HCT116 (cell line): ENCODE measurements at regions of chr19 and their contacts with region 1.

Region 1: GRCh38 chr19:39125554-39126311 is at the start of gene PAK4:
- DNase-seq: peak; percentile 96
- ATAC-seq: peak; percentile 86
- H3K4me3 ChIP-seq: peak within 1 kb of the TSS; percentile 96 to 99
- H3K27ac ChIP-seq: peak within 1 kb of the TSS; percentile 84
- H3K4me1 ChIP-seq: peaks cover 16 to 55% of the 10 kb centered on the region in 2 experiments
- H3K27me3 ChIP-seq: no peaks in the 10 kb centered on the region
- CTCF ChIP-seq: no peak
- POLR2A ChIP-seq: peak; percentile 51
- RAD21 ChIP-seq: no peak
- total RNA-seq, gene PAK4: 90.1 TPM

Region 2: DNA sequence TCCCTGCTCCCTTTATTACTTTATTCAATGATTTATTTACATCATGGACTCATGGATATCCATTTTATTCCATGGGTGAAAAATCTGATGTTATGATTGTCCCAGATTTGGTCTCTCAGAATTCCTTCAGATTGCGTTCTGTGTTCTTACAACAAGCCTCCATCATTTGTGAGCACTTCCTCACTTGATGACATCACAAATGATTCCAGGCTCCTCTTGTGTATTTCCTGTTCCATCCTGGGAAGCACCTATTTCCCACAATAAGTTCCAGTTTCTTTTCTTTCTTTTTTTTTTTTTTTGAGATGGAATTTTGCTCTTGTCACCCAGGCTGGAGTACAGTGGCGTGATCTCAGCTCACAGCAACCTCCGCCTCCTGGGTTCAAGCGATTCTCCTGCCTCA is 34.9 kb before region 1 on chr19:
- CTCF ChIA-PET with region 1: no interaction called
- POLR2A ChIA-PET with region 1: interaction called, 4 read pairs
- RAD21 ChIA-PET with region 1: interaction called in 1 of 2 experiments, 11 read pairs
- intact Hi-C with region 1: no loop called
- DNase-seq: no peak
- ATAC-seq: no peak
- H3K4me3 ChIP-seq: no peak overlapping the region
- H3K27ac ChIP-seq: no peak overlapping the region
- H3K4me1 ChIP-seq: no peaks in the 10 kb centered on the region
- H3K27me3 ChIP-seq: no peaks in the 10 kb centered on the region
- CTCF ChIP-seq: no peak
- POLR2A ChIP-seq: no peak
- RAD21 ChIP-seq: no peak

Region 3: GRCh38 chr19:39165857-39166256 is 40.1 kb after region 1 on chr19:
- CTCF ChIA-PET with region 1: no interaction called
- POLR2A ChIA-PET with region 1: no interaction called
- RAD21 ChIA-PET with region 1: no interaction called
- intact Hi-C with region 1: loop called (anchors 1 kb)
- DNase-seq: no peak
- ATAC-seq: no peak
- H3K4me3 ChIP-seq: no peak overlapping the region
- H3K27ac ChIP-seq: no peak overlapping the region; the same call in 1 of the 2 replicates
- H3K4me1 ChIP-seq: peaks cover 16 to 22% of the 10 kb centered on the region in 2 experiments; a peak in 3 of 4 replicates
- H3K27me3 ChIP-seq: no peaks in the 10 kb centered on the region
- CTCF ChIP-seq: no peak
- POLR2A ChIP-seq: no peak
- RAD21 ChIP-seq: no peak

Region 4: DNA sequence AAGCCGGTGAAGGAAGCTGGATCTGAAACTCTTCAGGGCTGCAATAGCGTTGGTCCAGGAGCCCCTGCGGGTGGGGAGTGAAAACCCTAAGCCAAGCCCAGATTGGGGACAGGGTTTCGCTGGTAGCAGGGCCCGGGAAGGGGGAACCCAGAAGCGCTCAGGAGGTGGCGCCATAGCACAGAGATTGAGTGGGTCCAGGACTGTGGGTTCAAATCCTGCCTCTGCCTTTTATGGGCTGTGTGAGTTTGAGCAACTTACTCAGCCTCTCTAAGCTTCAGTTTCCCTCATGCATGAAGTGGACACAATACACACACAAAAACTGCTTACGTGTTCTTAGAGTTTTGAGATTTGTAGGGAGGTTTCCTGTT is 86.6 kb after region 1 on chr19:
- CTCF ChIA-PET with region 1: interaction called, 11 read pairs
- POLR2A ChIA-PET with region 1: no interaction called
- RAD21 ChIA-PET with region 1: interaction called in 1 of 2 experiments, 3 read pairs
- intact Hi-C with region 1: no loop called
- DNase-seq: peak; percentile 53
- ATAC-seq: peak; percentile 97
- H3K4me3 ChIP-seq: no peak overlapping the region
- H3K27ac ChIP-seq: no peak overlapping the region
- H3K4me1 ChIP-seq: peaks cover 9 to 12% of the 10 kb centered on the region in 2 experiments; a peak in 3 of 4 replicates
- H3K27me3 ChIP-seq: no peaks in the 10 kb centered on the region
- CTCF ChIP-seq: peak; percentile 68 to 96 (median 85)
- POLR2A ChIP-seq: no peak
- RAD21 ChIP-seq: peak; percentile 98

Region 5: DNA sequence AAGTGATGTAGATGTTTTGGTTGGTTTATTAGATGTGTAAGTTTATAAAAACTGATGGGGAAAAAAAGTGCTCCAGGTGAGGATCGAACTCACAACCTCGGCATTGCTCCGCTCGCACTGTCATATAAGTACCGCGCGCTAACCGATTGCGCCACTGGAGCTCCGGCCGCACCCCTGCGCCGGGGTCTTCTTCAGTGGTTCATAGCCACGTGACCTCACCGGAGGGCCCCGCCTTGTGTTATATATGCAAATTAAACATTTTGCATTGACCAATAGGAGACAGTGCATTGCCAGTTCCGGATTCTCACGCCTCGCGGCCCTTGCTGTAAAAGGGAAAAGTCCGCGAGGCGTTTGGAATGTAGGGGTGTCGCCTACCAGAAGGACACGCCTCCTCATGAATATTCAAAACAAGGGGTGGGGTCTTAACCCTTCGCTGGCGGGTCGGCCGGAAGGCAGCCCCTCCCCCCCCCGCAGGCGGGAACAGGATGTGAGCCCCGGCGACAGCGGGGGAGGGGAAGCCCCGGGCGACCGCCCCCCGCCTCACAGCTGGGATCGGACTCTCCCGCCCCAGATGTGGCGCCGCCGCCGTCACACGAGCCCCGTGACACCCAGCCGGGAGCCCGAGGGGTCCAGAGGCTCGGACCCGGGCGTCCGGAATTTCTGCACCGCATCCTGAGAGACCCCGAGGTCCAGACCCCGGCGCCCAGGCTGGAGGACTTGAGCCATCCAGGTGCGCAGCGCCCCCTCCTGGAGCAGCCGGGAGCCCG is 286.6 kb after region 1 on chr19 and contains the start of gene PLEKHG2:
- CTCF ChIA-PET with region 1: no interaction called
- POLR2A ChIA-PET with region 1: no interaction called
- RAD21 ChIA-PET with region 1: no interaction called
- intact Hi-C with region 1: loop called (anchors 1 kb)
- DNase-seq: peak; percentile 98
- ATAC-seq: peak; percentile 65
- H3K4me3 ChIP-seq: peak within 1 kb of the TSS; percentile 90 to 98
- H3K27ac ChIP-seq: peak within 1 kb of the TSS; percentile 100
- H3K4me1 ChIP-seq: peaks cover 33 to 65% of the 10 kb centered on the region in 2 experiments
- H3K27me3 ChIP-seq: no peaks in the 10 kb centered on the region
- CTCF ChIP-seq: peak in 1 of 3 experiments; percentile 81; a peak in 3 of 6 replicates
- POLR2A ChIP-seq: peak; percentile 9
- RAD21 ChIP-seq: no peak
- total RNA-seq, gene PLEKHG2: 29.0 TPM